Activated CD4-positive, alpha-beta memory T cell treated with anti-CD3 and anti-CD28 coated beads for 36 hours (primary cell): ENCODE measurements at regions of chr1 and their contacts with region 1.

Region 1: GRCh38 chr1:66764994-66765578 is 12.8 kb downstream of the DYNLT5 start:
- DNase-seq: peak; percentile 52
- H3K4me3 Mint-ChIP-seq: no peak overlapping the region
- H3K27ac Mint-ChIP-seq: no peak overlapping the region
- H3K4me1 Mint-ChIP-seq: peaks cover 17% of the 10 kb centered on the region
- H3K27me3 Mint-ChIP-seq: no peaks in the 10 kb centered on the region

Region 2: DNA sequence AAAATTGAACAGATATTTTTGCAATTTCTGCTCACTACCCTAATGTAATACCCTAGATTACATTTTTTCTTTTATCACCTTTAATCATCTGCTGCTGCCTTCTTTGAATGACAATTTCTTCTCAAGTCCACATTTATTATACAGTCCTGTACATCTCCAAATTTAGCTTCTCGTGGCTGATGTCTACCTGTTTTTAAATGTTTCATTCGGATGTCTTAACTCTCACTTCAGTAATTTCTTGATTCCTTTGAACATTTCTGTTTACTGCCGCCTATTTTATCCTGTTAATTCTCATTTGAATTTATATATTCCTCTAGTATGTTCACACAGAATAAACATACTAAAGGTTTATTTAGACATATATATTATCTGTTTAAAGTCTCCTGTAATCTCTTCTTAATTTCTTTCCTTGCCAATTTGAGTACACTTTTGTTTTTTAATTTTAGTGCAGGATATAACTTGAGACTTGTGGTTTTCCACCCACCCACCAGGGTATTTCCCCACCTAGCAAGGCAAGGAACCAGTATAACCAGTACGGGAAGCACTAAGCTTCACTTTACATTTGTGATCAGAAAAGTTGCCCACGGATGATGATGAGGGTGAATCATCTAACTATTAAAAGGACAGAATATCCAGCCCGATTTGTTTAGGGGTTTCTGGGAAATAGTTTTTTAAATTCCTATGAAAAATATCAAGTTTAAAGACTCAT is 23.3 kb after region 1 on chr1:
- CTCF ChIA-PET with region 1: no interaction called
- POLR2A ChIA-PET with region 1: no interaction called
- intact Hi-C with region 1: loop called (anchors 1 kb)
- DNase-seq: peak; percentile 78
- H3K4me3 Mint-ChIP-seq: peak overlapping the region; percentile 44
- H3K27ac Mint-ChIP-seq: peak overlapping the region; percentile 62
- H3K4me1 Mint-ChIP-seq: peaks cover 14% of the 10 kb centered on the region
- H3K27me3 Mint-ChIP-seq: no peaks in the 10 kb centered on the region

Region 3: GRCh38 chr1:66929999-66930822 is 165.1 kb after region 1 on chr1:
- CTCF ChIA-PET with region 1: interaction called, 12 read pairs
- POLR2A ChIA-PET with region 1: no interaction called
- intact Hi-C with region 1: loop called (anchors 1 kb)
- DNase-seq: peak; percentile 96
- H3K4me3 Mint-ChIP-seq: peak overlapping the region; percentile 90
- H3K27ac Mint-ChIP-seq: peak overlapping the region; percentile 96
- H3K4me1 Mint-ChIP-seq: peaks cover 57% of the 10 kb centered on the region
- H3K27me3 Mint-ChIP-seq: no peaks in the 10 kb centered on the region

Region 4: DNA sequence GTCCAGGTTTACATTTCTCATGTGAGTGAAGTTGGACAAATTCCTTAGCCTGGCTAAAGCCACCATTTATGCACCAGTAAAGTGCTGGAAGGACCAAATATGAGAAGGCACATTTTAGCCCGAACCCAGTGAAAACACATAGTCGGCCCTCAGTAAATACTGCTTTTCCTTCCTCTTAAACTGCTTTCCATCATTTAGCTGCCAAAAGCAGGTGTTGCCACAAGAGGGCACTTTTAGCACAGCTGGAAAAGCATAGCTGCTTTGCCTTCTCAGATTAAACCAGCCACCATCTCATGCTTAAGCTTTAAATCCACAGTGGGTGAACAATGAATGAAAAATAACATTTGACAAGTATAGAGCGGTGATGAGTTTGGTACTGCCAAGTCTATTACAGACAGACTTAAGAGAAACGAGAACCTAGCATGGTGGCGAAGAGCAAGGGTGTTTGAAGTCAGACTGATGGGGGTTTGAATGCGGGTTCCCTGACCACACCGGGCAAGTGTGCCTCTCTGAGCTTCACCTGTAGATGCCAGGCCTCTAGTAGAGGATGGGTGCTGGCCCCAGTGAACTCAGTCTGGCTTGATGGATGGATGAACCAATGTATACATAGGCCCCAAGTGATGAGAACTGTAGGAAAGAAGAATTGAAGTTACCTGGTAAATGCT is 231.1 kb after region 1 on chr1:
- CTCF ChIA-PET with region 1: interaction called, 11 read pairs
- POLR2A ChIA-PET with region 1: no interaction called
- intact Hi-C with region 1: loop called (anchors 1 kb)
- DNase-seq: peak; percentile 78
- H3K4me3 Mint-ChIP-seq: no peak overlapping the region
- H3K27ac Mint-ChIP-seq: peak overlapping the region; percentile 25
- H3K4me1 Mint-ChIP-seq: peaks cover 16% of the 10 kb centered on the region
- H3K27me3 Mint-ChIP-seq: no peaks in the 10 kb centered on the region

Region 5: DNA sequence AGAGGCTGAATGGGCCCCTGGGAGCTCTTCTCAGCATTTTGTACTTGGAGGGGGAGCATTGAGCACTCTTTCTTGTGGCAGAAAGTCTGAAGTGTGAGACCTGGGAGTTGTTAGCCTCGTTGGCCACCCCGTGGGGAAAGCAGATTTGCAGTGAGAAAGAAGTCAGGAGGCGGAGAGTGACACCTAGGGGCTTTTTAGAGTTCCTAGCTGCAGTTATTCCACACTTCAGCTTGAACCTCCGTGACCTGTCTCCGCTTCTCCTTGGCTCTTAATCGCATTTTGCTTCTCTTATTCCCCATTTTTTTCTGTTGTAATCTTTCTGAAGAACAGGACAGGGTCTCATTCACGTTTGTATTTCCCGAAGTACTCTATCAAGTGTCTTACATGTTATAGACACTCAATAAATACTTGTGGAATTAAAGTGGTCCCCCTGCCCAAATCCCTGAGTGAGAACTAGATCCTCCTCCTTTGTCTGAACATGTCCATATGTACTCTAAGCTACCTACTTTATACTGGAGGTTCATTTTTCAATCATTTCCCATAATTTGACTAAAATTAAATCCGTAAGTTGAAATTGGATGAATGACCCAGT is 384.2 kb after region 1 on chr1:
- CTCF ChIA-PET with region 1: interaction called, 40 read pairs
- POLR2A ChIA-PET with region 1: no interaction called
- intact Hi-C with region 1: loop called (anchors 1 kb)
- DNase-seq: peak; percentile 77
- H3K4me3 Mint-ChIP-seq: no peak overlapping the region
- H3K27ac Mint-ChIP-seq: no peak overlapping the region
- H3K4me1 Mint-ChIP-seq: peaks cover 28% of the 10 kb centered on the region
- H3K27me3 Mint-ChIP-seq: peaks cover 10% of the 10 kb centered on the region